ENCODE measurements at regions of chr6 and their contacts with region 1.

Region 1: GRCh38 chr6:2749969-2750600 is 637 bp downstream of the MYLK4 start:
- H3K4me3 ChIP-seq: no peak overlapping the region
- H3K27ac ChIP-seq: no peak overlapping the region
- H3K4me1 ChIP-seq: peaks cover 13% of the 10 kb centered on the region
- CTCF ChIP-seq: no peak

Region 2: DNA sequence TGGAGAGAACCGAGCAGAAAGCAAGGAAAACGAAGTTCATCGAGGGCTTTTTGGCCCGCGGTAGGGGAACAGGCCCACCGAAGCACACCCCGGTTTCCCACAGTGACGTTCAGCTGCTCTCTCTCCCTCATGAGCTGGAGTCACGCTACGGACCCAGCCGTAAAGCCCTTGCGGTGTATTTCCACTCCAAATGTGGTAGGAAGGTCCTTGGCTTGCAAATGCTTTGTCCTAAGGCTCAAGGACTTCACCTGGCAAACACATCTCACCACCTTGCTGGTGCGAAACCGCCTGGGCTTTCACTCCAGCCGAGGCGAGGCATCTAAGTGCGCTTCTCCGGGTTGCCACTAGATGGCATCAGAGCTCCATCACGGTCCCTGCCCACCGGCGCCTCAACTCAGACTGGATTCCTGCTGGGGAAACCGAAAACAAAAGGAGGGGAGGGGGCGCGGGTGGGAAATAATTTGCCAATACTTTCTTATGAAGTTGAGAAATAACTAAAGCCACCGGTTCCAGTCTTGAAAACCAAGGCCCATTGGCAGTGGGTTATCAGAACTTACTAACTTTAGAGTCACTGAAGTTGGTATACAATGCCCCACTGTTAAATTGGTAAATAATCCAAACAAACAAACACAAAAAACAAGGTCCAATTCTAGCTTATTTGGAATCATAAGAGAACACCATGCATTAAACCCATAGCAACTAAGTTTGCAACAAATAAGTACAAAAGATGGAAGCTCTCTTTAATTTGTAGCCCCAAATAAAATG is 1153.8 kb before region 1 on chr6:
- CTCF ChIA-PET with region 1: interaction called, 19 read pairs
- POLR2A ChIA-PET with region 1: no interaction called
- H3K4me3 ChIP-seq: peak overlapping the region; percentile 5
- H3K27ac ChIP-seq: peak overlapping the region; percentile 90
- H3K4me1 ChIP-seq: peaks cover 31% of the 10 kb centered on the region
- CTCF ChIP-seq: peak; percentile 94

Region 3: GRCh38 chr6:2725999-2726567 is 24.0 kb before region 1 on chr6:
- CTCF ChIA-PET with region 1: interaction called, 13 read pairs
- POLR2A ChIA-PET with region 1: no interaction called
- H3K4me3 ChIP-seq: no peak overlapping the region
- H3K27ac ChIP-seq: no peak overlapping the region
- H3K4me1 ChIP-seq: no peaks in the 10 kb centered on the region
- CTCF ChIP-seq: no peak

Region 4: DNA sequence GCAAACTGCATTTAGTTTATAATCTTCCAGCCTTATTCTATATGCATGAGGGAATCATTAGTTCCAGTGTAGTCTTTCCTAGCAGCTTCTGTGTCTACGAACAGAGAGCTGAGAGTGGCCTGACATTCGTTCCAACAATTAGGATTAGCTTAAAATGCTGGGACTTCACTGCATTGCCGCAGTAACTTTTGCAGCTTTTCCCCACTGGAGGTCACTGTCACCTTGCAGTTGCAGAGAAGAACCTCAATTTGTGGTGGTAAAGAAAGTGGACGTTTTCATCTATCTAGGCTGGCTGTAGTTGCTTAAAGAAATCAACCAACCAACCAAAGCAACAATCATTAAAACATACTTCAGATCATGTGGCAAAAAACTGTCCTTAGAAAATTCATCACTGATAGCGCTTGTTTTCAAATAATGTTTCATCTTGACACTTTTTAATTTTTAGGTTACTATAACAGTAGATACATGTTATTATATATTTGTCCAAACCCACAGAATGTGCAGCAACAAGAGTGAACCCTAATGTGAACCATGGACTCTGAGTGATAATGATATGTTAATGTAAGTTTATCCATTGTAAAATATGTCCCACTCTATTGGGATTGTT is 11.6 kb before region 1 on chr6:
- CTCF ChIA-PET with region 1: interaction called, 212 read pairs
- POLR2A ChIA-PET with region 1: interaction called, 3 read pairs
- H3K4me3 ChIP-seq: no peak overlapping the region
- H3K27ac ChIP-seq: no peak overlapping the region
- H3K4me1 ChIP-seq: no peaks in the 10 kb centered on the region
- CTCF ChIP-seq: peak; percentile 82

Region 5: DNA sequence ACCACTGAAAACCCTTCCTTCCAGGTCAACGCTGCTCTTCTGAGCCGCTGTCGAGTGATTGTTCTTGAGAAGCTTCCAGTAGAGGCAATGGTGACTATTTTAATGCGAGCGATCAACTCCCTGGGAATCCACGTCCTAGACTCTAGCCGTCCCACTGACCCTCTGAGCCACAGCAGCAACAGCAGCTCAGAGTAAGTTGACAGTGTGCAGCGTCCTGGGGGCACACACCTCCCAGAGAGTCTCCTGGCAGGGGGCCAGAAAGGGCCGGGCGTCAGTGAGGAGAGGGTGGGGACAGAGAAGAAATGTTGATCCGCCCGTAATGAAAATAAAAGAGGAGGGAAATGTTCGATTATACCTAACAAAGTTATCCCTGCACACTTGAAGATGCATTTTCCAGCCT is 20.1 kb after region 1 on chr6:
- CTCF ChIA-PET with region 1: interaction called, 24 read pairs
- POLR2A ChIA-PET with region 1: interaction called, 3 read pairs
- H3K4me3 ChIP-seq: peak overlapping the region; percentile 15
- H3K27ac ChIP-seq: no peak overlapping the region
- H3K4me1 ChIP-seq: peaks cover 24% of the 10 kb centered on the region
- CTCF ChIP-seq: no peak

Region 6: GRCh38 chr6:3294921-3295871 is 545.1 kb after region 1 on chr6:
- CTCF ChIA-PET with region 1: no interaction called
- POLR2A ChIA-PET with region 1: no interaction called
- H3K4me3 ChIP-seq: no peak overlapping the region
- H3K27ac ChIP-seq: no peak overlapping the region
- H3K4me1 ChIP-seq: no peaks in the 10 kb centered on the region
- CTCF ChIP-seq: no peak

Measured in HEK293 (cell line).